PC-3 (cell line): ENCODE measurements at regions of chr6 and their contacts with region 1.

Region 1: GRCh38 chr6:79233611-79234149 is 802 bp downstream of the HMGN3 start:
- DNase-seq: peak; percentile 74
- ATAC-seq: peak; percentile 82
- H3K4me3 ChIP-seq: peak overlapping the region; percentile 97
- H3K27ac ChIP-seq: peak overlapping the region; percentile 48
- H3K4me1 ChIP-seq: peaks cover 23% of the 10 kb centered on the region
- H3K27me3 ChIP-seq: no peaks in the 10 kb centered on the region
- CTCF ChIP-seq: 0 out of 2 replicates have a peak, but pooled peaks have one; percentile 22

Region 2: DNA sequence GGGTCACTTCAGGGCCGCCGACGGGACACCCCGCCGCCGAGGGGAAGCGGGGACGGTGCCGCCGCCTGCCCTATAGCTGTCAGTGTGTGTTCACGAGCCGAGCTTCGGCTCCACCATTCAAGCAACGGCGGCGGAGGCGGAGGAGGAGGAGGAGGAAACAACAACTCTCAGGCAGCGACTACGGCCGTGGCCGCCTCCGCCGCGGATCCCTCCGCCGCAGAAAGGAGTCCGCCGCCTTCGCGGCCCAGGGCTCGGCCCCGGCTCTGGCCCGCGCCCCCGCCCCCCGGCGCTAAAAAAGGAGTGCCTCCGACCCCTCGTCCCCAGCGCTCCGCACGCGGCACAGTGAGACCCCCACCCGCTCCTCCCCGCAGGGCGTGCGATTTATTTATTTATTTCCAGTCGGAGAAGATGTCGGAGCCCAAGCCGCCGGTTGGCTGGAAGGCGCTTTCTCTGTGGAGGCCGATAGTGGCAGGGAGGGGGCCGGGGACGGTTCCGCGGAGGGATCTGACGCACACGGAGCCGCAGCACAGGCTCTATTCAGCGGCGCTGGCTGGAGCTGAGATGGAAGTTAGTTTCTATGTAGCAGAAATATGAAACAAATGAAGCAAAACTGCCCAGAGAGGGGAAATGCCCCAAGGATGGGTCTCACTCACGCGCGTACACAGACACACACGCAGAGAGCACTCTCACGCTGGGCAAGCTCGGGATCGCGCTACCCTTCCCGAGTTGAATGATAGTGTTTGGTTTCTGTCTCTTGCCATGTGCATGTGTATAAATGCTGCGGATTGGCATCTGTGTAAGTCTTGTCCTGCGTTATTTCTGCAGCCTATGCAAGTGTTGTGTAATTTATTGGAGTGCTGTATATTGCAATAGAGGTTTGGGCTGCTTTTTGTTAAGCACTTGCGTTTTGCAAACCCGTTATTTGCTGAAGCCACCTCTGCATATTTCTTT is 155.3 kb before region 1 on chr6 and contains the start of gene PHIP:
- CTCF ChIA-PET with region 1: no interaction called
- POLR2A ChIA-PET with region 1: no interaction called
- intact Hi-C with region 1: loop called (anchors 2 kb)
- DNase-seq: peak; percentile 79
- ATAC-seq: peak; percentile 66
- H3K4me3 ChIP-seq: peak within 1 kb of the TSS; percentile 99
- H3K27ac ChIP-seq: peak within 1 kb of the TSS; percentile 75
- H3K4me1 ChIP-seq: peaks cover 11% of the 10 kb centered on the region; the same call in 1 of the 2 replicates
- H3K27me3 ChIP-seq: no peaks in the 10 kb centered on the region
- CTCF ChIP-seq: no peak
- total RNA-seq, gene PHIP: 20.8 and 21.2 TPM in 2 replicates

Region 3: DNA sequence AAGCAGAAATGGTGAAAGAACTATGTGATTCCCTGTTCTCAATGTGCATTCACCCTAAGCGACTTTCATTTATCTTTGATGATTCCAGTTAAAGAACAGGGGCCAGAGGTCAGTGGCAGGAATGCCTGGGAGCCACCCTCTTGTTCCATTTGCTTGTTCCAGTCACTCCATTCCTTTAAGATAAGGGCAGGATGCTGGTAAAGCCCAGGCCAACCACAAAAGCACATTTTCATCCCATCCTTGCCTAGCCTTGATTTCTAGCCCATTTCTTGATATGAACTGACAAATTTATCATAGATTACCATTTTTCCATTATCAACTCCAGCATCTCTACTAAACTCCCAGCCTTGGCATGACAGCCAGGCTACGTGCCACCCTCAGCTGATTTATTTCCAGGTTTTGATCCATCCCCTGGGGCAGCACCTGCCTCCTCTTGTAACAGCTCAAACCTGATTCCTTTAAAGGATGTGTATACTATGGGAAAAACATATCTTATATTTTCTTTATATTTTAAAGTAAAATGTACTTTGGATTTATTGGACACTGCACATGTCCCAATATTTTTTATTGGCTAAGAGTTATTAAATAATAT is 18.4 kb before region 1 on chr6:
- CTCF ChIA-PET with region 1: no interaction called
- POLR2A ChIA-PET with region 1: no interaction called
- intact Hi-C with region 1: no loop called
- DNase-seq: no peak
- ATAC-seq: no peak
- H3K4me3 ChIP-seq: no peak overlapping the region
- H3K27ac ChIP-seq: no peak overlapping the region
- H3K4me1 ChIP-seq: no peaks in the 10 kb centered on the region
- H3K27me3 ChIP-seq: no peaks in the 10 kb centered on the region
- CTCF ChIP-seq: no peak

Region 4: GRCh38 chr6:79384845-79385244 is 151.2 kb after region 1 on chr6:
- CTCF ChIA-PET with region 1: no interaction called
- POLR2A ChIA-PET with region 1: no interaction called
- intact Hi-C with region 1: loop called (anchors 1 kb)
- DNase-seq: peak; percentile 35
- ATAC-seq: peak; percentile 53
- H3K4me3 ChIP-seq: no peak overlapping the region
- H3K27ac ChIP-seq: peak overlapping the region; percentile 89
- H3K4me1 ChIP-seq: peaks cover 27% of the 10 kb centered on the region
- H3K27me3 ChIP-seq: no peaks in the 10 kb centered on the region
- CTCF ChIP-seq: no peak

Region 5: DNA sequence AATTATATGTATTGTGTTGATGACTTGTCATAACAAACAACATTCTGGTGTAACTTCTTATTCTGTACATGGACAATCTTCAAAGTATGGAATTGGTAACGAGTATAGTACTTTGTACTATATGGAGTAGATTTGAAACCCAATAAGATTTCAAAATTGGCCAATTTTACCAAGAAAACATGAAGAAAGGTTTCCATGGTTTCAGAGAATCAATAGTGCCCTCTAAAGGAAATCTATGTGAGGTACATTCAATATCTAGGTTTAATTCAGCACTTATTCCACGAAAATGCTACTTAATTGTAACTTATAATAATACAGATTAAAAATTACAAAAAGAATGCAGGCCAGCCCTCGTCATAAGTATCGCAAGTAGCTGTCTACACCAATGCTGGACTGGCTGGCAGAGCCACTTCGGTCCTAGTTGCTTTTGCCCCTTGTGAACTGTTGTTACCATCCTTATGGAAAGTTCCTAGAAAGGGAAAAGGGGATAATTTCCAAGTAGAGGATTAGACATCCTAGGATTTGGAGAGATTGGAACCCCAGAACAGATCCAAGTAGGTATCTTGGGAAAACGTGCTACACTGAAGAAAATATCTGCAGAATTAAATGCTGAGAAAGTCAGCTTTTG is 232.6 kb after region 1 on chr6:
- CTCF ChIA-PET with region 1: no interaction called
- POLR2A ChIA-PET with region 1: no interaction called
- intact Hi-C with region 1: loop called (anchors 2 kb)
- DNase-seq: peak; percentile 62
- ATAC-seq: no peak
- H3K4me3 ChIP-seq: no peak overlapping the region
- H3K27ac ChIP-seq: no peak overlapping the region
- H3K4me1 ChIP-seq: peaks cover 29% of the 10 kb centered on the region
- H3K27me3 ChIP-seq: no peaks in the 10 kb centered on the region
- CTCF ChIP-seq: peak; percentile 71

Region 6: GRCh38 chr6:79536954-79537747 is 303.5 kb after region 1 on chr6 and contains the start of gene LCA5:
- CTCF ChIA-PET with region 1: no interaction called
- POLR2A ChIA-PET with region 1: no interaction called
- intact Hi-C with region 1: loop called (anchors 1 kb)
- DNase-seq: peak; percentile 92
- ATAC-seq: peak; percentile 95
- H3K4me3 ChIP-seq: peak within 1 kb of the TSS; percentile 93
- H3K27ac ChIP-seq: peak within 1 kb of the TSS; percentile 41
- H3K4me1 ChIP-seq: no peaks in the 10 kb centered on the region
- H3K27me3 ChIP-seq: no peaks in the 10 kb centered on the region
- CTCF ChIP-seq: no peak
- total RNA-seq, gene LCA5: 0.73 and 0.86 TPM in 2 replicates

Region 7: DNA sequence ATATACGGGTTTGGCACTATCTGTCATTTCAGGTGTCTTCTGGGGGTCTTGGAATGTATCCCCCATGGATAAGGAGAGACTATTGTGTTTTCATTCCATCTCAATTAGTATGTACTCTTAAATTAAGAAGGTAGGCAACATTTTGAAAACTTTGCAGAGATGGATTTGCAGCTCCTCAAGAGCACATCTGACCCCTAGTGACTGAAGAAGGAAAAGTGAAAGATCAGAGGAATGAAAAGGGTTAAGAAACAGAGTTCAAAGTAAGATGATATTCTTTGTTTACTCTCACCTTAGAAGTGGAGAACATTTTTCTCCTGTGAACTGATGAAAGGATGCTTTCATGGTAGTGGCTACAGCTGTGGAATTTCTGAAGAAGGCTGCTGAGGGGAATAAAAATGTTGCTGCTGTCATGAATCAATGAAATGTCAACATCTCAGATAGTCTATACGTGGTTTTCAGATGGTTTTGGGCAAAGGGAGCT is 439.0 kb after region 1 on chr6:
- CTCF ChIA-PET with region 1: no interaction called
- POLR2A ChIA-PET with region 1: no interaction called
- intact Hi-C with region 1: loop called (anchors 5 kb)
- DNase-seq: peak; percentile 65
- ATAC-seq: peak; percentile 41
- H3K4me3 ChIP-seq: no peak overlapping the region
- H3K27ac ChIP-seq: peak overlapping the region; percentile 70; the same call in 1 of the 2 replicates
- H3K4me1 ChIP-seq: peaks cover 23% of the 10 kb centered on the region
- H3K27me3 ChIP-seq: no peaks in the 10 kb centered on the region
- CTCF ChIP-seq: peak; percentile 81